CD4-positive, alpha-beta memory T cell (primary cell): ENCODE measurements at regions of chr4 and their contacts with region 1.

Region 1: GRCh38 chr4:185471235-185472102 is at the start of gene CCDC110:
- DNase-seq: peak; percentile 83 to 90 (median 87)
- H3K4me3 ChIP-seq: peak within 1 kb of the TSS; percentile 72 to 88
- H3K4me3 Mint-ChIP-seq: peak within 1 kb of the TSS; percentile 88 to 94 (median 92)
- H3K27ac ChIP-seq: peak within 1 kb of the TSS; percentile 28
- H3K27ac Mint-ChIP-seq: peak within 1 kb of the TSS; percentile 69 to 93 (median 90)
- H3K4me1 ChIP-seq: peaks cover 16% of the 10 kb centered on the region
- H3K4me1 Mint-ChIP-seq: peaks cover 6 to 17% (median 10%) of the 10 kb centered on the region in 4 donors
- H3K27me3 ChIP-seq: no peaks in the 10 kb centered on the region
- H3K27me3 Mint-ChIP-seq: peaks cover 0 to 2% of the 10 kb centered on the region in 2 donors
- total RNA-seq, gene CCDC110: 0.19 to 0.90 TPM

Region 2: GRCh38 chr4:183504064-183504929 is 1967.2 kb before region 1 on chr4:
- CTCF ChIA-PET with region 1: no interaction called
- POLR2A ChIA-PET with region 1: no interaction called
- intact Hi-C with region 1: loop called (anchors 2 kb)
- DNase-seq: peak; percentile 98 to 100 (median 99)
- H3K4me3 ChIP-seq: peak overlapping the region; percentile 50 to 73
- H3K4me3 Mint-ChIP-seq: peak overlapping the region; percentile 82 to 98 (median 94)
- H3K27ac ChIP-seq: peak overlapping the region; percentile 90
- H3K27ac Mint-ChIP-seq: peak overlapping the region; percentile 89 to 98 (median 95)
- H3K4me1 ChIP-seq: peaks cover 19% of the 10 kb centered on the region
- H3K4me1 Mint-ChIP-seq: peaks cover 9 to 27% (median 23%) of the 10 kb centered on the region in 4 donors
- H3K27me3 ChIP-seq: no peaks in the 10 kb centered on the region
- H3K27me3 Mint-ChIP-seq: no peaks in the 10 kb centered on the region

Region 3: DNA sequence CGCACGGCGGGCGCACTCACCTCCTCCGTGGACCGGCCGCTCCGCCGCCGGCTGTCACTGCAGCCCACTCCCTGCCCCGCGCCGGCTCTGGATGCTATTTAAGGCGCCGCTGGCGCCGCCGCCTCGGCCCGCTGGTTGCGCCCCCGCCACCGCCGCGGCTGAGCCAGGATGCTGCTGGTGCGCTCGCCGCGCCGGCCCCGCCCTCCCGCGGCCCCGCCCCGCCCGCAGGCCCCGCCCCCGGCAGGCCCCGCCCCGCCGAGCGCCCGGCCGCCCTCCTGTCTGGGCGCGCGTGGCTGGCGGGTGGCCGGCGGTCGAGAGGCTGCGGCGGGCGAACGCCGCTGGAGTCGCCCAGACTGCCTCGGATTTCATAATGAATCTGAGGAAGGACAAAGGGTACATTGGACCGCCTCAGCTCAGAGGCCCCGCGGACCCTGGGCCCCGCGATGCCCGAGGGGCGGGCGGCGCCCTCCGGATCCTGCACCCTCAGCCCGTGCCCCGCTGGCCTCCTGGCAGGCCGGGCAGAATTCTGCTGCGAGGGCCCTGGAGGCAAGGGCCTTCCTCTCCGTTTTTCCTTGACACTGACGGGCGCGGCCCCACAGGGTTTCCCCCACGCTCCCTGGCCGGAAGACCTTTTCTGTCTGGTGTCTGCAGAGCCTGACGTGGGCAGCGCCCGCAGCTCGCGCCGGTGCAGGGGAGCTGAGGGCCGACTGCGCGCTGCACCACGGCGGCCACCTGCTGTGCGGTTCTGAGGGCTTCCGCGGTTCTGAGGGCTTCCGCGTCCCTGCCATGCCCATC is 645.4 kb before region 1 on chr4 and contains the start of gene ACSL1:
- CTCF ChIA-PET with region 1: no interaction called
- POLR2A ChIA-PET with region 1: no interaction called
- intact Hi-C with region 1: loop called (anchors 5 kb)
- DNase-seq: peak; percentile 73 to 80 (median 79)
- H3K4me3 ChIP-seq: peak within 1 kb of the TSS; percentile 24 to 55
- H3K4me3 Mint-ChIP-seq: peak within 1 kb of the TSS; percentile 85 to 97 (median 91)
- H3K27ac ChIP-seq: peak within 1 kb of the TSS; percentile 56
- H3K27ac Mint-ChIP-seq: peak within 1 kb of the TSS; percentile 85 to 97 (median 93)
- H3K4me1 ChIP-seq: peaks cover 24% of the 10 kb centered on the region
- H3K4me1 Mint-ChIP-seq: peaks cover 13 to 45% (median 19%) of the 10 kb centered on the region in 4 donors
- H3K27me3 ChIP-seq: no peaks in the 10 kb centered on the region
- H3K27me3 Mint-ChIP-seq: no peaks in the 10 kb centered on the region
- total RNA-seq, gene ACSL1: 11.5 to 12.9 TPM

Region 4: GRCh38 chr4:185209031-185209851 is 262.2 kb before region 1 on chr4 and contains the start of gene SNX25:
- CTCF ChIA-PET with region 1: no interaction called
- POLR2A ChIA-PET with region 1: no interaction called
- intact Hi-C with region 1: loop called (anchors 1 kb)
- DNase-seq: peak; percentile 84 to 88 (median 86)
- H3K4me3 ChIP-seq: peak within 1 kb of the TSS; percentile 57 to 59
- H3K4me3 Mint-ChIP-seq: peak within 1 kb of the TSS; percentile 92 to 96 (median 93)
- H3K27ac ChIP-seq: peak within 1 kb of the TSS; percentile 46
- H3K27ac Mint-ChIP-seq: peak within 1 kb of the TSS; percentile 92 to 98 (median 93)
- H3K4me1 ChIP-seq: peaks cover 44% of the 10 kb centered on the region
- H3K4me1 Mint-ChIP-seq: peaks cover 33 to 62% (median 49%) of the 10 kb centered on the region in 4 donors
- H3K27me3 ChIP-seq: no peaks in the 10 kb centered on the region
- H3K27me3 Mint-ChIP-seq: no peaks in the 10 kb centered on the region
- total RNA-seq, gene SNX25: 23.0 to 24.5 TPM

Region 5: DNA sequence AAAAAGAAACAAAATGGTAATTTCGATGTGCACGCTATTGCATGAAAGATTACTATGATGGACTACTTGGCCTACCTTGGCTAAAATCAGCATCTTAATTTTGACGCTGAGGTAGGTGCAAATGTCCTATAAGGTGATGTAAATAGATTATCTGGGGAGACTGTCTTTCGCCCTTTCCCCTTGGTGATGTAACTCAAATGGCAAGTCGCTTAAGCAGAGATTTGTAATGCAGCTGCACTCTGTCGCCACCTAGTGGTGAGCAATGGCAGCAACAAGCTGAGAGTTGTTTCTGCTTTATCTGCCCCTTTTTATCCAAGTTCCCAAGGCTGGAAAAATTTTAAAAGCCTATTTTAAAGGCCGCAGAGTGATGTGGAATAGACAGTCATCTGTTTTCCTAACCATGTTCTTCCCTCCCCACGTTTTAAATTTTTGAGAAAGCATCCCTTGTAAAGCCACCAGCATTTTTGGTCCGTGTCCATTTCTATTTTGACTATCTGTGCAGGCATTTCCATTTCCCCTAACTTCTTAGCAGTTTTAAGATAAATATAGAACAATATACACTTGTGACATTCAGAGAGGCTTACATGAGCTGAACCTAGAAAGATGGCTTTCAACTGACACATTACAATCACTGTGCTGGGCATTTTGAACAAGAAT is 126.2 kb after region 1 on chr4:
- CTCF ChIA-PET with region 1: interaction called, 9 read pairs
- POLR2A ChIA-PET with region 1: no interaction called
- intact Hi-C with region 1: loop called (anchors 1 kb)
- DNase-seq: peak; percentile 53 to 63 (median 57)
- H3K4me3 ChIP-seq: no peak overlapping the region
- H3K4me3 Mint-ChIP-seq: no peak overlapping the region
- H3K27ac ChIP-seq: no peak overlapping the region
- H3K27ac Mint-ChIP-seq: no peak overlapping the region
- H3K4me1 ChIP-seq: no peaks in the 10 kb centered on the region
- H3K4me1 Mint-ChIP-seq: peaks cover 0 to 6% (median 0%) of the 10 kb centered on the region in 4 donors
- H3K27me3 ChIP-seq: no peaks in the 10 kb centered on the region
- H3K27me3 Mint-ChIP-seq: peaks cover 13 to 16% of the 10 kb centered on the region in 2 donors

Region 6: DNA sequence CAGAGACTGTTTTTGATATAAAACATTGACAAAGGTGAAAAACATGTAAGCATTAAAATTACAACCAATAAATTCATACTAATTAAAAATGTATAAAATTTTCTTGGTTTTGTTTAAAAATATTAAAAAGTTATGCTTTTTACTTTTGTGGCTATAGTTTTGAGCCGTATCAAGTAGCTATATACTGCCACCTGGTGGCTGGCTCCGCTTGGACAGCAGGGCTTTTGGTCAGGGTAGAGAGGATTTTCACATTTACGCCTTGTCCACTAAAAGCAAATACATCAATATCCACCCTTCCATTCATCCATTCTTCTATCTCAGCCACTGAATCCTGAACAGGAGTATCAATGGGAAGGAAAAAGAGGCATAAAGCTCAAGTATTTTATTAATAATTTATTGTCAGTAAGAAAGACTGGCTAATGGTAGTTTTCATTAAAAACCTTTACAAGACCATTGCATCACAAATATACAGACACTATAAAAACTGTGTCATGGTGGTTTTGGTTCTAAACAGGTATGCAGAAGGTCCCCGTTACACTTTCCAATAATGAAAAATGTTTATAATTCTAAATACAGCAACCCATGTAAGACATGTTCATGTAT is 1116.0 kb after region 1 on chr4:
- CTCF ChIA-PET with region 1: no interaction called
- POLR2A ChIA-PET with region 1: no interaction called
- intact Hi-C with region 1: loop called (anchors 5 kb)
- DNase-seq: peak in 4 of 5 donors; percentile 31 to 47 (median 38)
- H3K4me3 ChIP-seq: no peak overlapping the region
- H3K4me3 Mint-ChIP-seq: no peak overlapping the region
- H3K27ac ChIP-seq: no peak overlapping the region
- H3K27ac Mint-ChIP-seq: no peak overlapping the region
- H3K4me1 ChIP-seq: no peaks in the 10 kb centered on the region
- H3K4me1 Mint-ChIP-seq: no peaks in the 10 kb centered on the region
- H3K27me3 ChIP-seq: no peaks in the 10 kb centered on the region
- H3K27me3 Mint-ChIP-seq: no peaks in the 10 kb centered on the region